Activated B cell treated with CpG ODN at 0.5 μM for 24 hours (primary cell): ENCODE measurements at regions of chr12 and their contacts with region 1.

Region 1: DNA sequence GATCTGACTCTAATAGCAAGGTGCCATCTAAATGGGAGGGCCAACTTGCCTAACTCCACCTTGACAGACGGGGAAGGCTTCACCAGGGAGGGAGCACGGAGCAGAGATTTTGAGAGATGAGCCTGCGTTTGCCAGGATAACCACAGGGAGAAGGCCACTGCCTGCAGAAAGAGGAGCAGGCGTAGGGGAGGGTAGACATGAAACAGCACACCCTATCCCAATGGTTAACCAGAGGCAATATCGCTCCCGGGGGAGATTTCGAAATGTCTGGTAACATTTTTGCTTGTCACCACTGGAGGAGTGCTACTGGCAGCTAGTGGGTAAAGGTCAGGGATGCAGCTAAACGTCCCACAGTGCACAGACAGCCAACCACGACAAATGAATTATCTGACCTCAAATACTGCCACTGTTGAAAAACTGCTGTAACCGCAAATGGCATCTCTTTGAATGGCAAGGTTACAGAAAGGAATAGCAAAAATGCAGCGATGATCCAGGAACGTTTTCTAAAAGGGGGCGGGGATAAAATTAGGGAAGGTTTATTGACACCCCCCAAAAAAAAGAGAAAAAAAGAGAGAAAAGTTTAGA is 126.0 kb upstream of the ATF7IP start:
- DNase-seq: peak; percentile 48
- ATAC-seq: peak; percentile 82
- H3K4me3 Mint-ChIP-seq: peak overlapping the region; percentile 82
- H3K27ac Mint-ChIP-seq: peak overlapping the region; percentile 99
- H3K4me1 Mint-ChIP-seq: peaks cover 42% of the 10 kb centered on the region
- H3K27me3 Mint-ChIP-seq: no peaks in the 10 kb centered on the region
- CTCF ChIP-seq: no peak

Region 2: DNA sequence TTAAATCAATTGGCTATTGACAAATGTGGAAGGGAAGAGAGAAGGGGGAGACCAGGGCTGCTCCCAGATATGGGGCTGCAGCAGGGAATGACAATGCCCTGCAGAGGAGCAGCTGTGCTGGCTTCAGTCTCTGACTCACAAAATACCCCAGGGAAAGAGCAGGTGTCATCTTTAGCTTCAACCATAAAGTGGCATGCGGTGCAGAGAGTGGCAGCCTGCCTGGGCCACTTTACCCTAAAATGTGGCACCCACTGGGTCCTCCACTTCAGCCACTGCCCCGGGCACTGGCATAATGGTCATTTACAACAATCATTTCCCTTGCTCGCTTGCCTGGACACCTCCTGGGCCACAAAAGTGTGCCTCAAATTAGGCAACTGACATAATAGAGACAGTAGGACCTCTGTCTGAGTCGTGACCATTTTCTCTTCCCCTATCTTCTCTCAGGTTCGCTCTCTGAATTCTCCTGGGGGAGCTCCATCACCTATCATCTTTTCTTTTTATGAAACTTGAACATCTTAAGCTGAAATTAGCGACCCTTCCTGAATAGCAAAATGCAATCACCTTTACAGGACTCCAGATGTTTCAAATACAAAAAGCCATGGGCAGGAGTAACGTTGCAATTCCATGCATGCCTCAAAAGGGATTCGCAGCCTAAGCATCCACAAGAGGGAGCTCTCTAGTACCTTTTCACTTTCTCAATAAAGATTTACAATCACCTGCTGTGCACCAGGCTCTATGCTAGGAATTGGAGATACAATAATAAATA is 53.8 kb before region 1 on chr12:
- CTCF ChIA-PET with region 1: interaction called, 46 read pairs
- POLR2A ChIA-PET with region 1: interaction called, 7 read pairs
- intact Hi-C with region 1: loop called (anchors 1 kb)
- DNase-seq: peak; percentile 41
- ATAC-seq: peak; percentile 86
- H3K4me3 Mint-ChIP-seq: peak overlapping the region; percentile 69
- H3K27ac Mint-ChIP-seq: peak overlapping the region; percentile 87
- H3K4me1 Mint-ChIP-seq: peaks cover 30% of the 10 kb centered on the region
- H3K27me3 Mint-ChIP-seq: no peaks in the 10 kb centered on the region
- CTCF ChIP-seq: peak; percentile 28

Region 3: DNA sequence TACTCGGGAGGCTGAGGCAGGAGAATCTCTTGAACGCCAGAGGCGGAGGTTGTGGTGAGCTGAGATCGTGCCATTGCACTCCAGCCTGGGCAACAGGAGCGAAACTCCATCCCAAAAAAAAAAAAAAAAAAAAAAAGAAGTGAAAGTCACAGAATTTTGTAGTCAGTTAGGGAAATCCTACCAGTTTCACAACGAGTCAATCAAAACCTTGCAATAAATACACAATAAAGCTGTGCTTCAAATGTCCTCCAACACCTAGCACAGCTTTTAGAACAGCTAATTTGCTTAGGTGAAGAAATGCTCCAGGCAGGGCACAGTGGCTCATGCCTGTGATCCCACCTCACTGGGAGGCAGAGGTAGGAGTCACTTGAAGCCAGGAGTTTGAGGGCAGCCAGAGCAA is 13.3 kb after region 1 on chr12:
- CTCF ChIA-PET with region 1: interaction called, 17 read pairs
- POLR2A ChIA-PET with region 1: interaction called, 19 read pairs
- intact Hi-C with region 1: loop called (anchors 1 kb)
- DNase-seq: no peak
- ATAC-seq: no peak
- H3K4me3 Mint-ChIP-seq: no peak overlapping the region
- H3K27ac Mint-ChIP-seq: peak overlapping the region; percentile 56
- H3K4me1 Mint-ChIP-seq: peaks cover 51% of the 10 kb centered on the region
- H3K27me3 Mint-ChIP-seq: no peaks in the 10 kb centered on the region
- CTCF ChIP-seq: no peak

Region 4: GRCh38 chr12:14417715-14418114 is 178.3 kb after region 1 on chr12:
- CTCF ChIA-PET with region 1: interaction called, 27 read pairs
- POLR2A ChIA-PET with region 1: interaction called, 6 read pairs
- intact Hi-C with region 1: loop called (anchors 1 kb)
- DNase-seq: no peak
- ATAC-seq: peak; percentile 59
- H3K4me3 Mint-ChIP-seq: peak overlapping the region; percentile 58
- H3K27ac Mint-ChIP-seq: peak overlapping the region; percentile 82
- H3K4me1 Mint-ChIP-seq: peaks cover 55% of the 10 kb centered on the region
- H3K27me3 Mint-ChIP-seq: no peaks in the 10 kb centered on the region
- CTCF ChIP-seq: no peak

Region 5: DNA sequence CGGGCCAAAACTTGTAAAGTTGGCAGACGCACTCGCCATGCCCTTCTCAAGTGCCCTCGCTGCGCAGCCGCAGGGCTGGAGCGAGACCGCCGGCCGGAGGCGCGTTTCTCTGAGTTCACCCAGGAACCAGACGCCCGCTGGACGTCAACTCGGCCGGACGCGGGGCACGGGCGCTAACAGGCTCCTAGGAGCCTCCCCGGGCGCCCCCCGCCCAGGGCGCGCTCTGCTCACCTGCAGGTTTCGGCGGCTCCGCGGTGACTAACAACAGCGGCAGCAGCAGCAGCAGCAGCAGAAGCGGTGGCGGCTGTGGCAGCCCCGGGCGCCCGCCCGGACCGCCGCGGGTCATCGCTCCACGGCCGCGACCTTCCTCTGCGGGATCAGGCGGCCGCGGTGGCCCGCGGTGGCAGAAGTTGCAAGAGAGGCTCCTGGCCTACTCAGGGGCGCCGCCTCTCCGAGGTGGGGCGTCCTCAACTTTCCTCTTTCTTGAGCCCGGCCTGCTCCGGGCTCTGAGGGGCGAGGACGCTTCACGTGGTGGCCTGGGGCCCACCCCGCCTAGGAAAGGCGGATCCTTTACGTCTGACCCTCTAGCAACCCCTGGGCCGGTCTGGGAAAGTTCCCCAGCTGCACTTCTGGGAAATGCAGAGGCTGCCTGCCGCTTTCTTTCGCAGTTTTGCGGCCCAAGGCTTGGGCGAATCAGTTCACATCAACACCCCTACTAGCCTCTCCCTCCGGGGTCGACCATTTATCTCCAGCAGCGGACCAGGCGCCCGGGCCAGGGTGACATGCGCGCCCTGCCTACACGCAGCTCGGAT is 328.1 kb after region 1 on chr12 and contains the start of gene PLBD1:
- CTCF ChIA-PET with region 1: interaction called, 4 read pairs
- POLR2A ChIA-PET with region 1: no interaction called
- intact Hi-C with region 1: loop called (anchors 2 kb)
- DNase-seq: peak; percentile 33
- ATAC-seq: peak; percentile 69
- H3K4me3 Mint-ChIP-seq: peak within 1 kb of the TSS; percentile 62
- H3K27ac Mint-ChIP-seq: peak within 1 kb of the TSS; percentile 6
- H3K4me1 Mint-ChIP-seq: peaks cover 8% of the 10 kb centered on the region
- H3K27me3 Mint-ChIP-seq: peaks cover 10% of the 10 kb centered on the region
- CTCF ChIP-seq: no peak
- total RNA-seq, gene PLBD1: 0.33 and 0.56 TPM in 2 replicates

Region 6: GRCh38 chr12:14629832-14630710 is 390.6 kb after region 1 on chr12:
- CTCF ChIA-PET with region 1: interaction called, 5 read pairs
- POLR2A ChIA-PET with region 1: no interaction called
- intact Hi-C with region 1: loop called (anchors 1 kb)
- DNase-seq: peak; percentile 31
- ATAC-seq: peak; percentile 100
- H3K4me3 Mint-ChIP-seq: no peak overlapping the region
- H3K27ac Mint-ChIP-seq: no peak overlapping the region
- H3K4me1 Mint-ChIP-seq: peaks cover 3% of the 10 kb centered on the region
- H3K27me3 Mint-ChIP-seq: no peaks in the 10 kb centered on the region
- CTCF ChIP-seq: peak; percentile 89

Region 7: GRCh38 chr12:14995583-14996425 is 756.4 kb after region 1 on chr12:
- CTCF ChIA-PET with region 1: interaction called, 4 read pairs
- POLR2A ChIA-PET with region 1: no interaction called
- intact Hi-C with region 1: loop called (anchors 5 kb)
- DNase-seq: no peak
- ATAC-seq: peak; percentile 35
- H3K4me3 Mint-ChIP-seq: no peak overlapping the region
- H3K27ac Mint-ChIP-seq: peak overlapping the region; percentile 24
- H3K4me1 Mint-ChIP-seq: peaks cover 48% of the 10 kb centered on the region
- H3K27me3 Mint-ChIP-seq: peaks cover 9% of the 10 kb centered on the region
- CTCF ChIP-seq: peak; percentile 46

Region 8: GRCh38 chr12:16211731-16212130 is 1972.3 kb after region 1 on chr12:
- CTCF ChIA-PET with region 1: no interaction called
- POLR2A ChIA-PET with region 1: no interaction called
- intact Hi-C with region 1: no loop called
- DNase-seq: no peak
- ATAC-seq: no peak
- H3K4me3 Mint-ChIP-seq: no peak overlapping the region
- H3K27ac Mint-ChIP-seq: no peak overlapping the region
- H3K4me1 Mint-ChIP-seq: no peaks in the 10 kb centered on the region
- H3K27me3 Mint-ChIP-seq: no peaks in the 10 kb centered on the region
- CTCF ChIP-seq: no peak